Calu3 (cell line): ENCODE measurements at regions of chr20 and their contacts with region 1.

Region 1: DNA sequence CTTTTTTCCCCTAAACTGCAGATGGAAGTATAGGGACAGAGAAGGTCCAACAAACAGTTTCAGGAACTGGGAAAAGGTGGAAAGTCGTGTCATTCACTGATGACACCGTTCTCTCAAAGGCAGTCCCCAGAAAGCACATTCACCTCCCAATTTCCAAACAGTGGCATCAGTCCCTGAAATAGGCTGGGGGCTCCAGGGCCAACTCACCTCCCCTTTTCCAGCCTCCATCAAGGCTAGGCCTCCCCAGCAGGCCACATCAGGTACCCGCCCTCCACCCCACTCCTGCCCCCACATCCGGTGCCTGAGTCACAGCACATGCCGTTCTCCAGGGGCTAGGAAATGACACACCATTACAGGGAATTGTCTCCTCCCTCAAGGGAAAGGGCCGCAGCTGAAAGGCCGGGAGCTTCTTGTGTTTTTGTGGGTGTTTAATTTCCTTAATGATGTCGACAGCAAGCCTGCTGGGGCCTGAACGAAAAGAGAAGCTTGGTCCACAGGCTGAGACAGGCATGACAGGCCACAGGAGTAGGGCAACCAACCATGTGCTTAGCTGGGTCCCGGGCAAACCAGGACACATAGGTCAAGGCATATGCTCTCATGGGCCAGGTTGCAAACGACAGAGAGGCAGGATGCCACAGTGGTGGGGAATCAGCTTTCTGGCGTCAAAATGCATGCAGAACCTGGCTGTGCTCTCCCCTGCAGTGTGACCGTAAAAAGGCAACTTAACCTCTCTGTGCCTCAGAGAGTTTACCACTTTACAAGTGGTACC is 39.2 kb downstream of the ZMYND8 start:
- DNase-seq: peak; percentile 87
- H3K4me3 Mint-ChIP-seq: peak overlapping the region; percentile 54
- H3K27ac Mint-ChIP-seq: peak overlapping the region; percentile 97
- H3K4me1 Mint-ChIP-seq: peaks cover 70% of the 10 kb centered on the region
- H3K27me3 Mint-ChIP-seq: no peaks in the 10 kb centered on the region
- CTCF ChIP-seq: no peak

Region 2: GRCh38 chr20:47093320-47093966 is 223.9 kb before region 1 on chr20:
- CTCF ChIA-PET with region 1: no interaction called
- intact Hi-C with region 1: no loop called
- DNase-seq: no peak
- H3K4me3 Mint-ChIP-seq: no peak overlapping the region
- H3K27ac Mint-ChIP-seq: no peak overlapping the region
- H3K4me1 Mint-ChIP-seq: no peaks in the 10 kb centered on the region
- H3K27me3 Mint-ChIP-seq: peaks cover 35% of the 10 kb centered on the region
- CTCF ChIP-seq: no peak

Region 3: GRCh38 chr20:47334022-47334551 is 16.8 kb after region 1 on chr20:
- CTCF ChIA-PET with region 1: interaction called, 8 read pairs
- intact Hi-C with region 1: loop called (anchors 2 kb)
- DNase-seq: no peak
- H3K4me3 Mint-ChIP-seq: peak overlapping the region; percentile 50
- H3K27ac Mint-ChIP-seq: peak overlapping the region; percentile 41
- H3K4me1 Mint-ChIP-seq: peaks cover 61% of the 10 kb centered on the region
- H3K27me3 Mint-ChIP-seq: no peaks in the 10 kb centered on the region
- CTCF ChIP-seq: no peak

Region 4: DNA sequence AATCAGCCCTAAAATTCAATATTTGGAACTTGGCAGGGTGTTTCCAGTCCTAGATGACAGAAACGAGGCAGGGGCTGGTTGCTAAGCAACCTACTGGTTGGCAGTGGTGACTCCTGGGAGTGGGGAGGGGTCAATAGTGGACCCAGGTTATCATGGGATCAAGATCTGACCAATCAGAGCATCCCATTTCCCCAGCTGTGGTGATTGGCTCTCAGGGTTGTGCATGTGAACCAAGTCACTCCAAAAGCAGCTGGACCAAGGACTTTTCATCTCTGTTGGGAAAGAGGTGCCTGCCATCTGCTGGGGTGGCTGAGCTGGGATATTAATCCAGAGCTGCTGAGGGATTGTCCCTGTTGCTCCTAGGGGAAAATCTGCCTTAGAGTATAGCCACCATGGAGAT is 1257.1 kb after region 1 on chr20:
- CTCF ChIA-PET with region 1: no interaction called
- intact Hi-C with region 1: loop called (anchors 10 kb)
- DNase-seq: peak; percentile 20
- H3K4me3 Mint-ChIP-seq: no peak overlapping the region
- H3K27ac Mint-ChIP-seq: no peak overlapping the region
- H3K4me1 Mint-ChIP-seq: no peaks in the 10 kb centered on the region
- H3K27me3 Mint-ChIP-seq: peaks cover 60% of the 10 kb centered on the region
- CTCF ChIP-seq: no peak